PC-3 (cell line): ENCODE measurements at regions of chr6 and their contacts with region 1.

Region 1: GRCh38 chr6:144284783-144285547 is at the start of gene UTRN:
- DNase-seq: peak; percentile 69
- ATAC-seq: peak; percentile 50
- H3K4me3 ChIP-seq: peak within 1 kb of the TSS; percentile 92
- H3K27ac ChIP-seq: peak within 1 kb of the TSS; percentile 94
- H3K4me1 ChIP-seq: peaks cover 14% of the 10 kb centered on the region
- H3K27me3 ChIP-seq: no peaks in the 10 kb centered on the region
- CTCF ChIP-seq: no peak
- total RNA-seq, gene UTRN: 49.0 and 58.3 TPM in 2 replicates

Region 2: DNA sequence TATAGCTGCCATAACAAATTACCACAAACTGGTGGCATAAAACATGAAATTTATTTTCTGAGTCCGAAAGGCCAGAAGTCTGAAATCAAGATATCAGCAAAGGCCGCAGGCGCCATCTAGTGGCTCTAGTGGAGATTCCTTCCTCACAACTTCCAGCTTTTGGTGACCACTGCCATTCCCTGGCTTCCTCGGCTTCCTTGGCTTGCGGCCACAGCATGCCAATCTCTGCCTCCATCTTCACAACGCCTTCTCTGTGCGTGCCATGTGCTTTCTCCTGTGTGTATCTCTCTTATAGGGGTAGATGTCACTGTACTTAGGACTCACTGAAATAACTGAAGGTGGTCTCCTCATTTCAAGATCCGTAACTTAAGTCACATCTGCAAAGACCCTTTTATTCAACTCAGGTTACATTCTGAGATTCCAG is 271.5 kb before region 1 on chr6:
- CTCF ChIA-PET with region 1: no interaction called
- POLR2A ChIA-PET with region 1: no interaction called
- intact Hi-C with region 1: no loop called
- DNase-seq: peak; percentile 90
- ATAC-seq: peak; percentile 59
- H3K4me3 ChIP-seq: no peak overlapping the region
- H3K27ac ChIP-seq: no peak overlapping the region
- H3K4me1 ChIP-seq: 0 out of 2 replicates have a peak, but pooled peaks cover 10% of the 10 kb centered on the region
- H3K27me3 ChIP-seq: no peaks in the 10 kb centered on the region
- CTCF ChIP-seq: peak; percentile 83

Region 3: DNA sequence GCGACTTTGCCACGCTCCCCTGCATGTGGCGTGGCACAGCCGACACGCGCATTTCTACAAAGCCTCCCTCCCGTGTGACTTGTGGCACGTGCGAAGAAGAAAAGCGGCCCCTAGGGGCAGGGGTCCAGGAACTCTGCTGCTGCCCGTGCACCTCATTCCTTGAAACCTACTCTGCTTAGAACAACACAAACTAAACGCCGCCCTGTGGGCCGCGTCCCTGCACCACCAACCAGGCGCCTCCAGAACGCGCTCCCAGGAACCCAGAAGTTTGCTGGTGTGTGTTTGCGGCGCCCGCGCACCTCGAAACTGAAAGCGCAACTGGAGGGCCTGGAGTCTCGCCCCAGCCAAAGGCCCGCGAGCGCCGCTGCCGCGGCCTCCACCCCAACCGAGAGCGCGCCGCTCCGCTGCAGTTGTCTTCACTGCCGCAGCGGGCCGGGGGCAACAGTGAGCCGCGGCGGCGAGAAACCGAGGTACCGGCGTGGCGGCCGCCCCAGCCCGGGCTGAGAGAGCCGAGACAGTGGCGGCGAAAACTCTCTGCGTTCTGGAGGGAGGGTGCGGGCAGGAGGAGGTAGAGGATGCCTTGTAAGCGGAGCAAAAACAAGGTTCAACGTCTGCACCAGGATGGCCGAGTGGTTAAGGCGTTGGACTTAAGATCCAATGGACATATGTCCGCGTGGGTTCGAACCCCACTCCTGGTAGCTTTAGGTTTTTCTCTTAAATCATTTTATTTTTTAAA is 68.9 kb before region 1 on chr6:
- CTCF ChIA-PET with region 1: no interaction called
- POLR2A ChIA-PET with region 1: interaction called, 12 read pairs
- intact Hi-C with region 1: loop called (anchors 1 kb)
- DNase-seq: peak; percentile 94
- ATAC-seq: peak; percentile 82
- H3K4me3 ChIP-seq: peak overlapping the region; percentile 72
- H3K27ac ChIP-seq: peak overlapping the region; percentile 61
- H3K4me1 ChIP-seq: peaks cover 15% of the 10 kb centered on the region
- H3K27me3 ChIP-seq: no peaks in the 10 kb centered on the region
- CTCF ChIP-seq: peak; percentile 66

Region 4: DNA sequence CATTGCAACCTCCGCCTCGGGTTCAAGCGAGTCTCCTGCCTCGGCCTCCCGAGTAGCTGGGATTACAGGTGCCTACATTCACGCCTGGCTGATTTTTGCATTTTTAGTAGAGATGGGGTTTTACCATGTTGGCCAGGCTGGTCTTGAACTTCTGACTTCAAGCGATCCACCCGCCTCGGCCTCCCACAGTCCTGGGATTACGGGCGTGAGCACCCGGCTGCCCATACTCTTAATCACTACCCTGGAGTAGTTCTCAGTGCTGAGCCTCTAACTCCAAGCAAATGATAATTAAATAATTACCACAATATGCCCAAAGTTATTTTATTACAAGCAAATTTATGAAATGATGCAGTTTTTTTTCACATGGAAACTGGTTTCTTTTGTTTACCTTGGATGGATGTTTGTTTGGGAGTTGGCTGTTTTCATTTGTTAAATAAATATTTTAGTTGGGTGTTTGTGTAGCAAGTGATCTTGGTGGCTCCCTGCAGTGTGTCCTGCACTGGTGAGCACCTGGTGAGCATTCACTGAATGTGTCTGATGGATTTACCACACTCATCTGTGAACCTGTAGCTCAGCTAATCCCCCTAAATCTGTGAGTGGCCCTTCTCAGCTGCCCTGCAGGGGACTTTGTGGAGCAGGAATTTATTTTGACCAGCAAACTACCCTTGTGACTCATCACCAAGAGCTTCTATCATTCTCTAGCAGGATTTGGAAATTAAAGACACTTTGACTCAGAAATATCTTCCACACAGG is 37.0 kb after region 1 on chr6:
- CTCF ChIA-PET with region 1: no interaction called
- POLR2A ChIA-PET with region 1: no interaction called
- intact Hi-C with region 1: loop called (anchors 1 kb)
- DNase-seq: peak; percentile 68
- ATAC-seq: peak; percentile 84
- H3K4me3 ChIP-seq: peak overlapping the region; percentile 42
- H3K27ac ChIP-seq: peak overlapping the region; percentile 66
- H3K4me1 ChIP-seq: peaks cover 16% of the 10 kb centered on the region
- H3K27me3 ChIP-seq: no peaks in the 10 kb centered on the region
- CTCF ChIP-seq: 0 out of 2 replicates have a peak, but pooled peaks have one; percentile 8

Region 5: DNA sequence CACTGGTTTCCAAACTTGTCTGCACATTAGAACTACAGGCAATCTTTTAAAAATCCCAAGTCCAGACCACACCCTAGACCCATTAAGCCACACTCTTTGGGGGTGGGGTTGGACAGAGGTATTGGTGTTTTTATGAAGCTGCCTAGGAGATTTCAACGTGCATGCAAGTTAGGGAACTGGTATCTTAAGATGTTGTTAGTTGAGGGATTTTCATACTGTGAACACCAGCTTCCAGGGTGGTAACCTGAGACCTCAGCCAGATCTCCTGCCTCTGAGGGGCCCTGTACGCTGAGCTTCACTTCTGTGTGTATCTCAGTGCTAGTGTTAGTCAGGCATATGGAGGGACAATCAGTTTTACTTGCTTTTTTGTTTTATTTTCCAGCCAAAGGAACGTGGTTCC is 138.2 kb after region 1 on chr6:
- CTCF ChIA-PET with region 1: no interaction called
- POLR2A ChIA-PET with region 1: interaction called, 14 read pairs
- intact Hi-C with region 1: no loop called
- DNase-seq: no peak
- ATAC-seq: no peak
- H3K4me3 ChIP-seq: no peak overlapping the region
- H3K27ac ChIP-seq: no peak overlapping the region
- H3K4me1 ChIP-seq: no peaks in the 10 kb centered on the region
- H3K27me3 ChIP-seq: no peaks in the 10 kb centered on the region
- CTCF ChIP-seq: no peak

Region 6: DNA sequence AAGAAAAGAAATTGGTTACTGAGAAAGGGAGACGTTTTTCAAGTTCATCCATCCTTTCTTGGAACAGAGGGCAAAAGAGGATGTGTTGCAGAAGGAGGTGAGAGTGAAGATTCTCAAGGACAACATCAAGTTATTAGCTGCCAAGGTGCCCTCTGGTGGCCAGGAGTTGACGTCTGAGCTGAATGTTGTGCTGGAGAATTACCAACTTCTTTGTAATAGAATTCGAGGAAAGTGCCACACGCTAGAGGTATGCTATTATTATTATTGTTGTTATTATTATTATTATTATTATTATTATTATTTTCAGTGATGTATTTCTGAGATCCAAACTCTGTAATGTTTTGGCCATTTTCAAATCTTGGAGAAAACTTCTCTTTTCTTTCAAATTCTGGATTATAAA is 197.2 kb after region 1 on chr6:
- CTCF ChIA-PET with region 1: no interaction called
- POLR2A ChIA-PET with region 1: no interaction called
- intact Hi-C with region 1: loop called (anchors 2 kb)
- DNase-seq: peak; percentile 81
- ATAC-seq: peak; percentile 46
- H3K4me3 ChIP-seq: no peak overlapping the region
- H3K27ac ChIP-seq: no peak overlapping the region
- H3K4me1 ChIP-seq: no peaks in the 10 kb centered on the region
- H3K27me3 ChIP-seq: no peaks in the 10 kb centered on the region
- CTCF ChIP-seq: peak; percentile 61